CD4-positive, alpha-beta T cell (primary cell): ENCODE measurements at regions of chr17 and their contacts with region 1.

Region 1: DNA sequence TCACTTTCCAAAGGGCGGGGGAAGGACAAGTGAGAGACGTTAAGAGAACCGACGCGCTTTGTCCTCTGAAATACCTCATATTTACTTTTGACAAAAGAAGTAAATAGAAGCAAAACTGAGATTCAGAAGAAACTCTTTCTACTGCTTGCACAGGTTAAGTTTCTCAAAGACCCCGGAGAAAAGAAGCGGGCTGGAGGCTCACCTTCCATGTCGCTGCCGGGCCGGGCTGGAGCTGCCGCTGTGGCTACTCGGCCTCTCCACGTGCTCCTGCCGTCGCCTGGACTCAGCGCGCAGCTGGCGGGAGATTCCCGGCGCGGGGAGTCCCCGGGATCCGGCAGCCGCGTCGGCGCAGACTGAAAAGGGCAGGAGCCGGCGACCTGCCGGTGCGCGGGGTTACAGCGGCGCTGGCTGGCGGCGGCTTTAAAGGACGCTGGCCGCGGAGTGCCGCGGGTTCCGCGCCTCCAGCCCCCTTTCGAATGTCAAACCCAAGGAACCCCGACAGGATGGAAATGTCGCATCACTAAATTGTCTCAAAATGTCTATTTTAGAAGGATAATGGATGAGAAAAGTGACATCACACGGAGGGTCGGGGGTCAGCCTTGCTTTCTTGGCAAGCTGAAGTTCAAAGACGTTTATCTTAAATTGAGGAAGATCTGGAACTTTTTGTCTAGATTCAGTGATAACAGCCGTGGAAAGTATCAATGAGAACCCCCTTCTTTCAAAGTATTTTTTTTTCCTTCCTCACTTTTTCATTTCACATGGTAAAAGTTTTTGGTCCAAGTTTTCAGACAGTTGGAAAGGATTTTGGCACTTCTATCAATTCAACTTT is at the start of gene IKZF3:
- DNase-seq: peak; percentile 55 to 95 (median 73)
- ATAC-seq: peak; percentile 75
- H3K4me3 ChIP-seq: peak within 1 kb of the TSS; percentile 80
- H3K4me3 Mint-ChIP-seq: peak within 1 kb of the TSS; percentile 96
- H3K27ac ChIP-seq: peak within 1 kb of the TSS; percentile 88 to 89
- H3K27ac Mint-ChIP-seq: peak within 1 kb of the TSS; percentile 94
- H3K4me1 ChIP-seq: peaks cover 37% of the 10 kb centered on the region
- H3K4me1 Mint-ChIP-seq: peaks cover 81% of the 10 kb centered on the region
- H3K27me3 ChIP-seq: no peaks in the 10 kb centered on the region
- H3K27me3 Mint-ChIP-seq: no peaks in the 10 kb centered on the region
- CTCF ChIP-seq: peak; percentile 54
- total RNA-seq, gene IKZF3: 39.7 to 39.9 TPM

Region 2: GRCh38 chr17:39636927-39637736 is 227.0 kb before region 1 on chr17 and contains the start of gene STARD3:
- CTCF ChIA-PET with region 1: no interaction called
- POLR2A ChIA-PET with region 1: no interaction called
- intact Hi-C with region 1: loop called in 1 of 2 experiments (anchors 1 kb)
- DNase-seq: peak; percentile 84 to 95 (median 88)
- ATAC-seq: peak; percentile 82
- H3K4me3 ChIP-seq: peak within 1 kb of the TSS; percentile 94
- H3K4me3 Mint-ChIP-seq: peak within 1 kb of the TSS; percentile 97
- H3K27ac ChIP-seq: peak within 1 kb of the TSS; percentile 92 to 94
- H3K27ac Mint-ChIP-seq: peak within 1 kb of the TSS; percentile 91
- H3K4me1 ChIP-seq: peaks cover 76% of the 10 kb centered on the region
- H3K4me1 Mint-ChIP-seq: peaks cover 68% of the 10 kb centered on the region
- H3K27me3 ChIP-seq: peaks cover 0 to 2% of the 10 kb centered on the region in 2 experiments
- H3K27me3 Mint-ChIP-seq: no peaks in the 10 kb centered on the region
- CTCF ChIP-seq: peak; percentile 43
- total RNA-seq, gene STARD3: 96.5 to 99.9 TPM

Region 3: GRCh38 chr17:39769974-39770587 is 94.1 kb before region 1 on chr17:
- CTCF ChIA-PET with region 1: interaction called, 14 read pairs
- POLR2A ChIA-PET with region 1: interaction called, 5 read pairs
- intact Hi-C with region 1: loop called in 1 of 2 experiments (anchors 1 kb)
- DNase-seq: peak; percentile 23 to 87 (median 55)
- ATAC-seq: peak; percentile 83
- H3K4me3 ChIP-seq: peak overlapping the region; percentile 6
- H3K4me3 Mint-ChIP-seq: peak overlapping the region; percentile 8
- H3K27ac ChIP-seq: peak overlapping the region; percentile 66 to 87
- H3K27ac Mint-ChIP-seq: peak overlapping the region; percentile 84
- H3K4me1 ChIP-seq: peaks cover 82% of the 10 kb centered on the region
- H3K4me1 Mint-ChIP-seq: peaks cover 100% of the 10 kb centered on the region
- H3K27me3 ChIP-seq: no peaks in the 10 kb centered on the region
- H3K27me3 Mint-ChIP-seq: no peaks in the 10 kb centered on the region
- CTCF ChIP-seq: no peak

Region 4: DNA sequence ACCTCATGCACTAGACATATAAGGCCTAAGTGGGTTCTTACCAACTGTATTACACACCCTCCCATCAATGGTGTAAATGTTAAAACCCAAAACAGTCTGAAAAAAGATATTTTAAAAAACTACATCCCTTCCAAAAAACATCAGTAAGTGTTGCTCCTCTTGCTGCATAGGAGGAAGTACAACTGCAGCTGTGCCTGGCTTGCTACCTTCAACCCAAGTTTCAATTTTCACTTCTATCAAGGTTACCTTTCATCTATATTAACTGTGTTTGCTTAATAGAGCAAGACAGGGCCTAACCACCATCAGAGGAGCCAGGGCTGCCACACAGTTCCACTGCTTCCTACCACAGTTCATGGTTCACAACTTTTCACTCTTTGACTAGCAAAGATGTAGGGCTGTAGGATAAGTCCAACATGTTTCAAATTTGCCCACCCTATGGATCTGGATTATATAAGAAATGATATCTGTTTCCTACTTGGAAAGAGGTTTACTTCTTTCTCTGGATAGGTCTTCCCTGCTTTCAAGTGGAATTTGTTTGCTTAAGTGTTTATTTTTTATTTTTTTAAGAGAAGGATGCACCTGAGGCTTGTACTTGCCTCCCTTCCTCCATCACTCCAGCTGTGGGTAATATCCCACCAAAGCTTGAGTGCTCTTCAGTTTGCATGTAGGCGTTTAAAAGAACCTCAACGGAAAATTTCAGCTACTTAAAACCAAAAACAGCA is 69.7 kb before region 1 on chr17:
- CTCF ChIA-PET with region 1: interaction called, 10 read pairs
- POLR2A ChIA-PET with region 1: interaction called, 3 read pairs
- intact Hi-C with region 1: no loop called
- DNase-seq: peak in 10 of 14 experiments; percentile 19 to 80 (median 36)
- ATAC-seq: peak; percentile 74
- H3K4me3 ChIP-seq: no peak overlapping the region
- H3K4me3 Mint-ChIP-seq: peak overlapping the region; percentile 79
- H3K27ac ChIP-seq: peak overlapping the region; percentile 53 to 79
- H3K27ac Mint-ChIP-seq: peak overlapping the region; percentile 84
- H3K4me1 ChIP-seq: peaks cover 65% of the 10 kb centered on the region
- H3K4me1 Mint-ChIP-seq: peaks cover 75% of the 10 kb centered on the region
- H3K27me3 ChIP-seq: no peaks in the 10 kb centered on the region
- H3K27me3 Mint-ChIP-seq: no peaks in the 10 kb centered on the region
- CTCF ChIP-seq: no peak

Region 5: GRCh38 chr17:39822051-39822451 is 42.1 kb before region 1 on chr17:
- CTCF ChIA-PET with region 1: interaction called, 11 read pairs
- POLR2A ChIA-PET with region 1: interaction called, 32 read pairs
- intact Hi-C with region 1: loop called (anchors 2 kb)
- DNase-seq: peak in 2 of 14 experiments; percentile 33 to 55
- ATAC-seq: no peak
- H3K4me3 ChIP-seq: no peak overlapping the region
- H3K4me3 Mint-ChIP-seq: no peak overlapping the region
- H3K27ac ChIP-seq: peak overlapping the region in 1 of 2 donors; percentile 26
- H3K27ac Mint-ChIP-seq: peak overlapping the region; percentile 94
- H3K4me1 ChIP-seq: peaks cover 35% of the 10 kb centered on the region
- H3K4me1 Mint-ChIP-seq: peaks cover 58% of the 10 kb centered on the region
- H3K27me3 ChIP-seq: no peaks in the 10 kb centered on the region
- H3K27me3 Mint-ChIP-seq: no peaks in the 10 kb centered on the region
- CTCF ChIP-seq: no peak

Region 6: GRCh38 chr17:39852239-39852638 is 11.9 kb before region 1 on chr17:
- CTCF ChIA-PET with region 1: interaction called, 10 read pairs
- POLR2A ChIA-PET with region 1: interaction called, 9 read pairs
- intact Hi-C with region 1: loop called in 1 of 2 experiments (anchors 1 kb)
- DNase-seq: no peak
- ATAC-seq: no peak
- H3K4me3 ChIP-seq: no peak overlapping the region
- H3K4me3 Mint-ChIP-seq: no peak overlapping the region
- H3K27ac ChIP-seq: peak overlapping the region in 1 of 2 donors; percentile 43
- H3K27ac Mint-ChIP-seq: peak overlapping the region; percentile 18
- H3K4me1 ChIP-seq: peaks cover 21% of the 10 kb centered on the region
- H3K4me1 Mint-ChIP-seq: peaks cover 55% of the 10 kb centered on the region
- H3K27me3 ChIP-seq: no peaks in the 10 kb centered on the region
- H3K27me3 Mint-ChIP-seq: no peaks in the 10 kb centered on the region
- CTCF ChIP-seq: no peak